ENCODE measurements at regions of chr5 and their contacts with region 1.

Region 1: GRCh38 chr5:139633295-139634027 is 14.7 kb upstream of the CXXC5 start:
- DNase-seq: peak; percentile 83
- H3K4me3 Mint-ChIP-seq: no peak overlapping the region
- H3K27ac Mint-ChIP-seq: no peak overlapping the region
- H3K4me1 Mint-ChIP-seq: peaks cover 34% of the 10 kb centered on the region
- H3K27me3 Mint-ChIP-seq: no peaks in the 10 kb centered on the region
- CTCF ChIP-seq: peak; percentile 99

Region 2: DNA sequence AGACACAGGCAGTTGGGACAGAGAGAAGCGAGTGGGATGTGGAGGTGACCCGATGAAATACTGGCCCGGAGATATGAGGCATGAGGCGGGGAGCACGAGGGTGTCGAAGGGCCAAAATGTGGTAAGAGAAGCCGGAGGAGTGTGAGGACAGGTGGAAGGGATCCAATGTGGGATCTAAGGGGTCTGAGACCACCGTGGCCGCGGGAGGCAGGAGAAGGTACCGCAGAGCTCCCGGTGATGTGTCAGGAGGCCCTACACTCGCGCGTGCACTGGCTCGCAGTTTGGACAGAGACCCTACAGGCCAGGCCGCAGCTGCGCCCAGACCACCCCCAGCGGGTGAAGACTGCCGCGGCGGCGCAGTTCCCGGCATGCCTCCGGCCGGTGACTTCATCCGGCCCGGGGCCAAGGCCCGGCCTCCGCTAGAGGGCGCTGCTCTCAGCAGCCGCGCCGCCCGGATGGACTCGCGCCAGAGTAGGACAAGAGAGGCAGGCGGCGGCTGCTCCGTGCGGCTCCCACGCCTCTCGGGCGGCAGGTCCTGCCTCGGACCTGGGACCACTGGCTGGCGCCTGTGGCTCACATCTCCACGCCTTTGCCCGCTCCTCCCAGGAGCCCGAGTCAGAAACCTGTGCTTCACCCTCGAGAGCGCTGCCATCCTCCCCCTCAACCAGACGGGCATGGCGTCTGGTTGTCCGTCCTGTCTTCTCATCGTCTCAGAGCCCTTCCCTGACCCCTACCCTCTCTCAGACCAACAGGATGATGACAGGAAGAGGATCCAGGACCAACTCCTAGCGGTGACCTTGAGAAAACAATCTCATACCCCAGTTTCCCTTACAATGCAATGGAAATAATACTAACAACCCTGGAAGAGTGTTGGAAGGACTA is 115.5 kb before region 1 on chr5:
- CTCF ChIA-PET with region 1: interaction called, 4 read pairs
- POLR2A ChIA-PET with region 1: interaction called, 5 read pairs
- intact Hi-C with region 1: loop called (anchors 5 kb)
- DNase-seq: peak; percentile 91
- H3K4me3 Mint-ChIP-seq: peak overlapping the region; percentile 81
- H3K27ac Mint-ChIP-seq: peak overlapping the region; percentile 87
- H3K4me1 Mint-ChIP-seq: peaks cover 16% of the 10 kb centered on the region
- H3K27me3 Mint-ChIP-seq: no peaks in the 10 kb centered on the region
- CTCF ChIP-seq: peak; percentile 99

Region 3: GRCh38 chr5:139611703-139612584 is 21.5 kb before region 1 on chr5:
- CTCF ChIA-PET with region 1: interaction called, 35 read pairs
- POLR2A ChIA-PET with region 1: interaction called, 7 read pairs
- intact Hi-C with region 1: no loop called
- DNase-seq: no peak
- H3K4me3 Mint-ChIP-seq: no peak overlapping the region
- H3K27ac Mint-ChIP-seq: no peak overlapping the region
- H3K4me1 Mint-ChIP-seq: no peaks in the 10 kb centered on the region
- H3K27me3 Mint-ChIP-seq: no peaks in the 10 kb centered on the region
- CTCF ChIP-seq: no peak

Region 4: DNA sequence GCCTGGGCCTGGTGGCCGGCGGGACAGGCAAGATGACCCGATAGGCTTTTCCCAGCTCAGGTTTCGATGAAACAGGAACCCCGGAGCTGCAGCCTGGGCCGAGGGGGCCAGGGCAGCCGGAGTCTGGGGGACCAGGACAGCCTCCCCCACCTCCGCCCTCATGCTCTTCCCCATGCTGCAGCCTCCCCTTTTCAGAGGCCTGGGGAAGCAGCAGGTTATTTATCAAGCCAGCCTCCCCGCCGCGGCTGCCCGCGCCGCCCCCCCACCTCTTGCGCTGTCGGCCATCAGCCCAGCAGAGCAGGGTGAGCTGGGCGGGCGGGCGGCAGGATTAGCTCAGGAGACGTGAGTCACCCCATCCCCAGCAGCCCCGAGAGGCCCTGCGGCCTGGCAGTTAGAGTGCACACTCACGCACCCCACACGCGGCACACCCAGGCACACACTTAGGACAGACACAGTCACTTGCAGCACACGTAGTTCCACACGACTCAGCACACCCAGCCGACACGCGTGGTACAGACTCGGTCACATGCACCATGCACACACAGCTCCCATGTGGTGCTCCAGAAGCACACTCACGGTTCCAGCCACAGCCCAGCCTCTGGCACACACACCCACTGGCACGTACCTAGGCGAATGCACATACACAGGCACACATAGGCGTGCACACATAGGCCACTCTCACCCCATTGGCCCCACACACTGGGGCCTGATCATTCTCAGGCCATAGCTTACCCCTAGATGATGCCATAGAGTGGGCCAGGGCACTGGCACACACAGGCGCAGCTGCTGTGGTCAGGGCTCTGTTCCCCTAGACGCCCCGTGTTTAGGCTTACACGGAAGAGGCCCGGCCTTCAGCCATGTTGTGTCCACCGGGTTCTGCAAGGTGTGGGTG is 27.7 kb after region 1 on chr5:
- CTCF ChIA-PET with region 1: interaction called, 67 read pairs
- POLR2A ChIA-PET with region 1: interaction called, 68 read pairs
- intact Hi-C with region 1: no loop called
- DNase-seq: peak; percentile 97
- H3K4me3 Mint-ChIP-seq: peak overlapping the region; percentile 44
- H3K27ac Mint-ChIP-seq: peak overlapping the region; percentile 54
- H3K4me1 Mint-ChIP-seq: peaks cover 26% of the 10 kb centered on the region
- H3K27me3 Mint-ChIP-seq: no peaks in the 10 kb centered on the region
- CTCF ChIP-seq: no peak

Region 5: GRCh38 chr5:139684881-139685749 is 51.7 kb after region 1 on chr5:
- CTCF ChIA-PET with region 1: interaction called, 321 read pairs
- POLR2A ChIA-PET with region 1: interaction called, 15 read pairs
- intact Hi-C with region 1: loop called (anchors 1 kb)
- DNase-seq: peak; percentile 58
- H3K4me3 Mint-ChIP-seq: no peak overlapping the region
- H3K27ac Mint-ChIP-seq: no peak overlapping the region
- H3K4me1 Mint-ChIP-seq: peaks cover 6% of the 10 kb centered on the region
- H3K27me3 Mint-ChIP-seq: no peaks in the 10 kb centered on the region
- CTCF ChIP-seq: peak; percentile 5

Region 6: GRCh38 chr5:139745800-139746690 is 112.6 kb after region 1 on chr5:
- CTCF ChIA-PET with region 1: interaction called, 43 read pairs
- POLR2A ChIA-PET with region 1: no interaction called
- intact Hi-C with region 1: no loop called
- DNase-seq: peak; percentile 90
- H3K4me3 Mint-ChIP-seq: peak overlapping the region; percentile 62
- H3K27ac Mint-ChIP-seq: no peak overlapping the region
- H3K4me1 Mint-ChIP-seq: peaks cover 13% of the 10 kb centered on the region
- H3K27me3 Mint-ChIP-seq: peaks cover 37% of the 10 kb centered on the region
- CTCF ChIP-seq: no peak

Region 7: DNA sequence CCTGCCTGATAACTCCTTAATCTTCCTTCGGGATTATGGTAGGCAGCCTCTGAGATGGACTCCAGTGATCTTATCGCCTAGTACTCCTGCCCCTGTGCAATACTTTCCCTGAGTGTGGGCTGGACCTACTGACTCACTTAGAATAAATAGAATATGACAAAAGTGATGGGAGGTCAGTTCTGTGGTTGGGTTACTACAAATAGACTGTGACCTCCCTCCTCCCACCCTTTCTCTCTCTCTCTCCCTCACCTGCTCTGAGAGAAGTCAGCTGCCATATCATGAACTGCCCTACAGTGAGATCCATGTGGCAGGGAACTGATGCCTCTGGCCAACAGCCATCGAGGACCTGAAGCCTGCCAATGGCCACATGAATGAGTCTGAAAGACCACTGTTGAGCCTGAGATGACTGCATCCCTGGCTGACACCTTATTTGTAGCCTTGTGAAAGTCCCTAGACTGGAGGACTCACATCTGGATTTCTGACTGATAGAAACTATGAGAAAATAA is 377.9 kb after region 1 on chr5:
- CTCF ChIA-PET with region 1: no interaction called
- POLR2A ChIA-PET with region 1: no interaction called
- intact Hi-C with region 1: no loop called
- DNase-seq: peak; percentile 44
- H3K4me3 Mint-ChIP-seq: no peak overlapping the region
- H3K27ac Mint-ChIP-seq: no peak overlapping the region
- H3K4me1 Mint-ChIP-seq: no peaks in the 10 kb centered on the region
- H3K27me3 Mint-ChIP-seq: peaks cover 9% of the 10 kb centered on the region
- CTCF ChIP-seq: no peak